ENCODE measurements at regions of chr5 and their contacts with region 1.

Region 1: DNA sequence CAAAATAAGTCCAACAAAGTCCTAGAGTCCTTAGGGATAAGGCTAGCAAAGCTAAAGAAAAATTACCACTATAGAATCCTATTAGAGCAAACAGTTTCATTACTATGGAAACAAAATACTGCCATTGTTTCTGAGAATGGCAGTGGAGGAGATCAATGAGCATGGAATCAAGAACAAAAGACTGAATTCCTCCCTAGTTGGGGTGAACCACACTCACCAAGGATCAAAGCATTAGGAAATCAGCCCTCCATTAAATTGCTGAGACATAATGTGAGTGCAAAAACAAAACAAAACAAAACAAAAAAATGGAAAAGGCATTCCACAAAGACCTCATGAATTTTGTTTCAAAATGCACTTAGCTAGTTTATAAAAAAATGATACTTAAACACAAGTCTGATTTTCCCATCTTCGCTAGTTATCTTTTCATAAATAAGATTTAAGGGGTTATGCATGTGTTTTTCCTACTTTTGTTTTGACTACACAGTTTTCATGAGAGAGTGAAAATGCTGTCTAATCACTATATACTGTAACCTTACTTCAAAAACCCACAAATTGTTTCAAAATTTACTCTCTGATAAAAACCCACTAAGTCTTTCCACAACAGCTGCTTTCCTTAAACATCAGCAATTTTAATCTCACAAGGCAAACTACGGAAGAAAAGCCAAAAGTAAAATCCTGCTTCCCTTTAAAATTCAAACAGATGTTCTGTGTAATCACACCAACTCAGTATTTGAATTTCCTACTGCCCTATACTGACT is 9.7 kb downstream of the SERINC5 start:
- DNase-seq: no peak
- ATAC-seq: peak; percentile 27
- H3K4me3 ChIP-seq: no peak overlapping the region
- H3K27ac ChIP-seq: no peak overlapping the region
- H3K4me1 ChIP-seq: peaks cover 6 to 9% of the 10 kb centered on the region in 2 donors
- H3K27me3 ChIP-seq: no peaks in the 10 kb centered on the region

Region 2: DNA sequence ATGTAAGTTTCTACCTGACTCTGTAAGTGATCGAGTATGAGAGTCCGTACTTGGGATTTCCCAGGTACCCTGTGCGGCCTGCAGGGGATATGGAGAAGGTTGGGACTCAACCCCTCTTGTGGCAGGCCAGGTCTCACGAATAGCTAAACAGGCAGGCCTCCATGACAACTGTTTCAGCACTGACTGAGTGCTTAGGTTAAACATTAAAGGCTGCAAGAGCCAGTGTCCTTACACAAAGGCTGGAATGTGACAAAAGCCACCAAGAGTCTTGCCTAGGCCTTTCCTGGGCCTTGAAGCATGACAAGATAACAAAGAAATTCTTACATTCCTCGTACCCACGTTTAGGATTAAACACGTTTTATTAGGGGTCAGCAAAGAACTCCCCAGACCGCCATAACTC is 152.4 kb before region 1 on chr5:
- intact Hi-C with region 1: no loop called
- DNase-seq: no peak
- ATAC-seq: no peak
- H3K4me3 ChIP-seq: no peak overlapping the region
- H3K27ac ChIP-seq: no peak overlapping the region
- H3K4me1 ChIP-seq: no peaks in the 10 kb centered on the region
- H3K27me3 ChIP-seq: no peaks in the 10 kb centered on the region

Region 3: DNA sequence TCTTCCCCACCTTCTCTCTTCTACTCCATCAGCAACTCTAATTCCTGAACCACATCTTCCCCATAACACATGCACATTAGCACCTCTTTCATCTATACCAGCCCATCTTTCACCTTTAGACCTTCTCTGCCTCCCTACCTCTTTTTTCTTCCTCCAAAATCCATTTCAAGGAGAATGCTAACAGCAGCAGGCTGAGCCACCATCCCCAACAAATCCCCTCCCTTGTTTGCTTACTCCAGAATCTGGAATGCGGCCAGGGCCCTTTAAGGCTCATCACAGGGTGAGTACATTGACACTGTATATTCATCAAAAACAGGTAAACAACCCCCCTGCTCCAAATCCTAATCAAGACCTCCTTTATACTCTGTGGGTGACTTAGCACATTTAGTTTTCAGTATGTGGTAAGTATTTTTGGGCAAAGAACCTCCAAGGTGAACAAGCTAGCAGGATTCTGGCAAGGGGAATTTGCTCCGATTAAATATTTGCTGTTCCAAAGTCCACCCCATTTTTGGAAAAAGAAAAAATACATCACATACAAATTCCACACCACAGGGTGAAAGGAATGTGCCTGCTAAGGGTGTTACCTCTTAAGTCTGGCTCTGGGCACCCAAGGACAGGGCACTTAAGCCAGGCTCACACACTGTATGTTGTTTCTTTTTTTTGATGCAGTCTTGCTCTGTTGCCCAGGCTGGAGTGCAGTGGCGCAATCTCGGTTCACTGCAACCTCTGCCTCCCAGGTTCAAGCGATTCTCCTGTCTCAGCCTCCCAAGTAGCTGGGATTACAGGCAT is 61.8 kb before region 1 on chr5:
- intact Hi-C with region 1: loop called in 1 of 2 experiments (anchors 5 kb)
- DNase-seq: no peak
- ATAC-seq: no peak
- H3K4me3 ChIP-seq: no peak overlapping the region
- H3K27ac ChIP-seq: no peak overlapping the region
- H3K4me1 ChIP-seq: peaks cover 0 to 5% of the 10 kb centered on the region in 2 donors
- H3K27me3 ChIP-seq: no peaks in the 10 kb centered on the region

Region 4: GRCh38 chr5:80216753-80217596 is 29.2 kb before region 1 on chr5:
- intact Hi-C with region 1: loop called in 1 of 2 experiments (anchors 1 kb)
- DNase-seq: peak; percentile 87 to 88
- ATAC-seq: peak; percentile 83
- H3K4me3 ChIP-seq: no peak overlapping the region
- H3K27ac ChIP-seq: peak overlapping the region in 1 of 2 donors; percentile 0
- H3K4me1 ChIP-seq: no peaks in the 10 kb centered on the region
- H3K27me3 ChIP-seq: no peaks in the 10 kb centered on the region

Measured in aorta (tissue), 5 donors.